GM23248 (cell line): ENCODE measurements at regions of chr10 and their contacts with region 1.

Region 1: GRCh38 chr10:22573820-22574569 is 140.4 kb downstream of the PIP4K2A start:
- DNase-seq: peak; percentile 59
- H3K4me3 ChIP-seq: no peak overlapping the region
- H3K27ac ChIP-seq: no peak overlapping the region
- H3K4me1 ChIP-seq: no peaks in the 10 kb centered on the region
- H3K27me3 ChIP-seq: no peaks in the 10 kb centered on the region

Region 2: GRCh38 chr10:22666287-22667092 is 92.5 kb after region 1 on chr10:
- in situ Hi-C with region 1: no loop called
- DNase-seq: no peak
- H3K4me3 ChIP-seq: no peak overlapping the region
- H3K27ac ChIP-seq: no peak overlapping the region
- H3K4me1 ChIP-seq: peaks cover 10% of the 10 kb centered on the region
- H3K27me3 ChIP-seq: no peaks in the 10 kb centered on the region

Region 3: DNA sequence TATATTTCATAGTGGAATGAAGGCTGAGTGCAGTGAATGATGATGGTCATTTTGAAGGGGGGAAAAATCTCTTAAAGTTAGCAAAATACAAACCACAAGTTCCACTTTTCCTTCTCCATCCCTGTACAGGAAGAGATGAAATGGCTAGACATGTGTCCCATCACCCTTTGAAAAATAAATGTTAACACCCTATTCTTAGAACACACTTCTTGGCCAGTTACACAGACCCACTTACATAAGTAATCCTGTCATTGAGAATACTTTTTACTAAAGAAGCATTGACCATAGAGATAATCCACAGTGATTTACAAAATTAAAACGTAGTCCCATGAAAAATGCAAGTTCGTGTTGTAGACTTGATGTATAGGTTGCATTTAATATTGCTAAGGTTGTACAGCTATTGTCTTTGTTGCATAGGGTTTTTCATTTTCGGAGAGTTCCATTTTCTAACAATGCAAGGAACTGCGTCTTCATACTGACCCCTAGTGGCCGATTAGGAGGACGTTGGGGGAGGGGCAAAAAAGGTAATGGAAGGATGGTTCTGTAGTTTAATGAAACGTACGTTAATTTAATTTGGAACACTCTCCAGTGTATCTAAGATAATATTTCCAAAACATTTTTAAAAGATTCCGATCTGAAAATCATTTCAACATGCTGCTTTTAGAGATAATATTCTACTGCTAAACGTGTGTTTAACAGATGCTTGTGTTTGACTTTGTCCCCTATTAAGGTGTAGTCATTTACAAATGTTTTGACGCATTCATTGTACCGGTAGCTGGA is 414.8 kb after region 1 on chr10:
- in situ Hi-C with region 1: loop called (anchors 10 kb)
- DNase-seq: peak; percentile 78
- H3K4me3 ChIP-seq: no peak overlapping the region
- H3K27ac ChIP-seq: no peak overlapping the region
- H3K4me1 ChIP-seq: no peaks in the 10 kb centered on the region
- H3K27me3 ChIP-seq: no peaks in the 10 kb centered on the region